ENCODE measurements at regions of chr1 and their contacts with region 1.

Region 1: GRCh38 chr1:204431310-204432165 is 19.9 kb upstream of the PPP1R15B start:
- DNase-seq: peak; percentile 80
- H3K27ac ChIP-seq: peak overlapping the region; percentile 69
- CTCF ChIP-seq: peak; percentile 90

Region 2: GRCh38 chr1:204366736-204367135 is 64.8 kb before region 1 on chr1:
- CTCF ChIA-PET with region 1: no interaction called
- POLR2A ChIA-PET with region 1: no interaction called
- DNase-seq: no peak
- H3K27ac ChIP-seq: no peak overlapping the region
- CTCF ChIP-seq: no peak

Region 3: DNA sequence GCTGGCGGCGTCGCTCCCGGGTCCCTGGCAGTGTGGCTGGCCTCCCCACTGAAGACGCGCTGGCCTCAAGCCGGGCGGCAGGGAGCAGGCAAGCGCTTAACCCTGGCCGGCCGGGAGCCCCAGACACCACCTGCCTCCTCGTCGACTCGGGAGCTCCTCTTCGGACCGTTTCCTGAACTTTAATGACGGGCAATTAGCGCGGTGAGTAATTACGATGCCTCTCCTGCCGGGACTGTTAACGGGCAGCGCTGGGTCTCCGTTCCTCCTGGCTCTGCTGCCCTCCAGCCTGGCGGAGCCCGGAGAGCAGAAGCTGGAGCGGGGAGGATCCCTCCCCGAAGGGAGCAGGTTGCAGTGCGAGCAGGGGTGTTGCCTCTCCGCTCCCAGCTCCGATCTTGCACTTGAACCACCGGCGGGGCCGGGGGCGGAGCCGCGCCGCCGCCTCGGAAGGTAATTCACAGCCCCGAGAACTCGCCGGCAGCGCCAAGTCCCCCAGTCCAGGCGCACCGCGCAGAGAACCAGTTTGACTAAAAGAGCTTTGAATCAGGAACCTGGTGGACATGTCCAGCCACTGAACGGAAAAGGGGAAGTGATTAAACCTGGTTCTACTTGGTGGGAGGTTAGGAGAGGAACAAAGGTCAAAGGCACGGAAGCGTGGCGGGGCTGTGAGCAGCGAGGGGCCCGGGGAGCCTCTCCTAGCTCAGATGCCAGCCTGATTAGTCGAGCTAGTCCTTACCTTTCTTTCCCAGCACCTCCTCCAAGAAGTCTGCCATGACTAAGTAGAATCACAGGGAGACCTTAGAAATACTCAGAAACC is 53.5 kb before region 1 on chr1:
- CTCF ChIA-PET with region 1: no interaction called
- POLR2A ChIA-PET with region 1: no interaction called
- DNase-seq: peak; percentile 56
- H3K27ac ChIP-seq: no peak overlapping the region
- CTCF ChIP-seq: no peak

Region 4: DNA sequence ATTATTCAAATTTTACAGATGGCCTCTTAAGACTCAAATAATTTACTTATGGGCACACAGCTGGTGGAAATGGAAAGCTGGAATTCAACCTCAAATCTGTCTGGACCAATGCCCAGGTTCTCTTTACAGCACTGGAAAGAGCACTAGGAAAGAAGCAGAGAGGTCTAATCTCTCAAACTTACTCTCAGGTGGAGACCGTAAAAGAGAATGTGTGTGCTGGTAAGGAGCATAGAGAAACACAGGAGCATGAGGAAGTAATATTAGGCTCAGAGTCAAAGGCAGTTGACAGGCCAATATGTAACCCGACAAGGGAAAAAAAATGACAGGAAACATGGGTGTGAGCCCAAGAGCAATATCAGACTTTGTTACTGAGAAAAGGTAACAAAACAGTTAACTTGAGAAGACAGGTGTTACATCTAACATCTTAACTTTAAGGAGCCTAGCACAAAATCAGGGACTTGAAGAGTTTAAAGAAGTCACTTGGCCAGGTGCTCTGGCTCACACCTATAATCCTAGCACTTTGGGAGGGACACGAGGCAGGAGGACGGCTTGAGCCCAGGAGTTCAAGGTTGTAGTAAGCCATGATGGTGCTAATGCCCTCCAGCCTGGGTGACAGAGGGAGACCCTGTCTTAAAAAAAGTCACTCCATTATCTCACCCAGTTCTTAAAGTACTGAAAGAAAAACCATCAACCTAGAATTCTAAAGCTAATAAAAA is 40.6 kb before region 1 on chr1:
- CTCF ChIA-PET with region 1: no interaction called
- POLR2A ChIA-PET with region 1: no interaction called
- DNase-seq: no peak
- H3K27ac ChIP-seq: no peak overlapping the region
- CTCF ChIP-seq: no peak

Region 5: GRCh38 chr1:204411451-204412204 is 19.9 kb before region 1 on chr1 and contains the start of gene PPP1R15B:
- CTCF ChIA-PET with region 1: interaction called, 20 read pairs
- POLR2A ChIA-PET with region 1: no interaction called
- DNase-seq: peak; percentile 100
- H3K27ac ChIP-seq: peak within 1 kb of the TSS; percentile 94
- CTCF ChIP-seq: no peak

Region 6: GRCh38 chr1:204417231-204417997 is 14.1 kb before region 1 on chr1:
- CTCF ChIA-PET with region 1: interaction called, 20 read pairs
- POLR2A ChIA-PET with region 1: interaction called, 6 read pairs
- DNase-seq: peak; percentile 97
- H3K27ac ChIP-seq: peak overlapping the region; percentile 92
- CTCF ChIP-seq: no peak

Region 7: GRCh38 chr1:204446370-204447111 is 15.0 kb after region 1 on chr1:
- CTCF ChIA-PET with region 1: interaction called, 27 read pairs
- POLR2A ChIA-PET with region 1: no interaction called
- DNase-seq: peak; percentile 67
- H3K27ac ChIP-seq: peak overlapping the region; percentile 48; the same call in 1 of the 2 replicates
- CTCF ChIP-seq: peak; percentile 37

Region 8: GRCh38 chr1:204480515-204480914 is 49.0 kb after region 1 on chr1:
- CTCF ChIA-PET with region 1: interaction called, 22 read pairs
- POLR2A ChIA-PET with region 1: no interaction called
- DNase-seq: no peak
- H3K27ac ChIP-seq: no peak overlapping the region
- CTCF ChIP-seq: no peak

Region 9: GRCh38 chr1:204494281-204495077 is 62.9 kb after region 1 on chr1 and contains the start of gene PIK3C2B:
- CTCF ChIA-PET with region 1: interaction called, 41 read pairs
- POLR2A ChIA-PET with region 1: interaction called, 4 read pairs
- DNase-seq: peak; percentile 97
- H3K27ac ChIP-seq: peak within 1 kb of the TSS; percentile 94
- CTCF ChIP-seq: peak; percentile 58

Region 10: DNA sequence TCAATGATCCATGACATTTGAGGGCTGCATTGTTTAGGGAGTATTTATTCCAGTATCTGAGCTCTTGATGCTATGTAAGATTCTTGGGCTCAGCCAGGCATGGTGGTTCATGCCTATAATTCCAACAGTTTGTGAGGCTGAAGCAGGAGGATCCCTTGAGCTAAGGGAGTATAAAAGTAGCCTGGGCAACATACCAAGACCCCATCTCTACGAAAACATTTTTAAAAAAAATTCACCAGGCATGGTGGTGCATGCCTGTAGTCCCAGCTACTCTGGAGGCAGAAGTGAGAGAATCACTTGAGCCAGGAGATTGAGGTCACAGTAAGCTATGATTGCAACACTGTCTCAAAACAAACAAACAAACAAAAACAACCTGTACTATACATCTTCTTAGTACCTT is 69.8 kb after region 1 on chr1:
- CTCF ChIA-PET with region 1: interaction called, 41 read pairs
- POLR2A ChIA-PET with region 1: no interaction called
- DNase-seq: no peak
- H3K27ac ChIP-seq: no peak overlapping the region
- CTCF ChIP-seq: no peak

Region 11: GRCh38 chr1:204607910-204608309 is 176.4 kb after region 1 on chr1:
- CTCF ChIA-PET with region 1: no interaction called
- POLR2A ChIA-PET with region 1: no interaction called
- DNase-seq: no peak
- H3K27ac ChIP-seq: no peak overlapping the region
- CTCF ChIP-seq: no peak